Caco-2 (cell line): ENCODE measurements at regions of chr10 and their contacts with region 1.

Region 1: DNA sequence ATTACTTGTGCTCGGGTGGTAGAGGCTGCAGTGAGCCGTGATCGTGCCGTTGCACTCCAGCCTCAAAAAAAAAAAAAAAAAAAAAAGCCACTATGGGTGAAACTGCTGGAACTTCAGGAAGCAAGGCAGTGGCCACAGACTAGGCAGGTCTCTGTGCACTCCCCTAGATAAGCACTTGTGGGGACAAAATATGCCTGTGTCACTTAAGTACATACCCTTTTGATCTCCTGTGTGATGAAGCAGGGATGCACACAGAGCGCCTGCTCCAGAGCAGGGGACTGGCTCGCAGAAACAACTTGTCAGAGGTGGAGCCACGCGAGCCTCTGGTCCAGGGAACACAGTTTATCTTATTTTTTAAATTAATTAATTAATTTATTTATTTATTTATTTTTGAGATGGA is 42.9 kb upstream of the PSAP start:
- DNase-seq: no peak
- H3K4me3 ChIP-seq: no peak overlapping the region
- H3K4me3 Mint-ChIP-seq: no peak overlapping the region
- H3K27ac Mint-ChIP-seq: no peak overlapping the region
- H3K4me1 ChIP-seq: peaks cover 22% of the 10 kb centered on the region
- H3K4me1 Mint-ChIP-seq: peaks cover 20% of the 10 kb centered on the region
- H3K27me3 ChIP-seq: no peaks in the 10 kb centered on the region
- H3K27me3 Mint-ChIP-seq: no peaks in the 10 kb centered on the region
- CTCF ChIP-seq: no peak

Region 2: DNA sequence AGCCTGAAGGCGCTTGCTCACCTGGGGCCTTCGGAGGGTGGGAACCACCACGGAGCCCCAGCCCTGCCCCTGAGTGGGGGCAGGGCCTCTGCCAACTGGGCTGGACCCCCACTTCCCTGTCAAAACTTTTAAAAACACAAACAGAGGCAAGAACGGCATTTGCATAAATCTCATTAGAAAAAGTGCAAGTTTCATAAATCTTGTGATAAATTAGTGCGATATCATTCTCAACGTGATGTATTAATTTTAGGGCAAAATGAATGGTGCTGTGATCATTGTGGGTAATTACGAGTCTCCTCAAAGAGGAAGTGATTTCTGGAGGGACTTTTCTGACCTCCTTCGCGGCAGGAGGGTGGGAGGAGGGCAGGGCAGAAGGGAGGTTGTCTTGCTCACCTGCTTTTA is 398.9 kb before region 1 on chr10:
- CTCF ChIA-PET with region 1: no interaction called
- POLR2A ChIA-PET with region 1: no interaction called
- intact Hi-C with region 1: no loop called
- DNase-seq: no peak
- H3K4me3 ChIP-seq: no peak overlapping the region
- H3K4me3 Mint-ChIP-seq: no peak overlapping the region
- H3K27ac Mint-ChIP-seq: no peak overlapping the region
- H3K4me1 ChIP-seq: no peaks in the 10 kb centered on the region
- H3K4me1 Mint-ChIP-seq: no peaks in the 10 kb centered on the region
- H3K27me3 ChIP-seq: no peaks in the 10 kb centered on the region
- H3K27me3 Mint-ChIP-seq: peaks cover 4% of the 10 kb centered on the region
- CTCF ChIP-seq: no peak

Region 3: DNA sequence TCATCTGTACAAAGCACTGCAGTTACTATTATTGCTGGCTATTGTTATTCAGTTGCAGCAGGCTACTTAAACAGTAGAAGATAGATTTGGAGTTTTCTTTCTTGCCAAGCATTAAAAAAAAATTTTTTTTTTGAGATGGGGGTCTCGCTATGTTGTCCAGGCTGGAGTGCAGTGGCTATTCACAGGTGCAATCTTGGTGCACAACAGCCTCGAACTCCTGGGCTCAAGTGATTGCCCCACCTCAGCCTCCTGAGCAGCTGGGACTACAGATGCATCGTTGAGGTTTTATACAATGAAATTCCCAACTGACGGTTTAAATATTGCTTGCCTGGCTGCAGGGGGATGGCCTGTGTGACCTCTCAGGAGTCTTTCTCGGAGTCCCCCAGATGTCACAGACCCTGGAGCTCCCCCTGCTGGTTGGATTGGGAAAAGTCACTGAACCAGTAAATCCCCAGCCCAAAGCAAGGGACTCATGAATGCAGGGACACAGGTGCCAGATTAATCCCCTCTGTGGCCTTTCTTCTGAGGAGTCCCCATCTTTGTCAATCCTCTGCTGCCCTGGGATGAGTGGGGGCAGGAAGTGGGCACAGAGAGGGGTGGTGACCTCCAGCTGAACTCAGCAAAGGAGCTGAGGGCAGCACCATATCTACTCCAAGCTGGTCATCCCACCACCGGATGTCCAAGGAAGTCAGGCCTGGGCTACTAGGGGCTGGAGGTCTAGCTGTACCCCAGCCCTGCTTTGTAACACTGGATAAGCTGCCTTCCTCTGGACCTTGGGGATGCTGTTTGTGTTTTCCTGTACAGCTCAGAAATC is 323.9 kb before region 1 on chr10:
- CTCF ChIA-PET with region 1: no interaction called
- POLR2A ChIA-PET with region 1: no interaction called
- intact Hi-C with region 1: no loop called
- DNase-seq: peak; percentile 79 to 88
- H3K4me3 ChIP-seq: no peak overlapping the region
- H3K4me3 Mint-ChIP-seq: no peak overlapping the region
- H3K27ac Mint-ChIP-seq: no peak overlapping the region
- H3K4me1 ChIP-seq: no peaks in the 10 kb centered on the region
- H3K4me1 Mint-ChIP-seq: no peaks in the 10 kb centered on the region
- H3K27me3 ChIP-seq: no peaks in the 10 kb centered on the region
- H3K27me3 Mint-ChIP-seq: peaks cover 5% of the 10 kb centered on the region
- CTCF ChIP-seq: peak; percentile 94 to 95

Region 4: DNA sequence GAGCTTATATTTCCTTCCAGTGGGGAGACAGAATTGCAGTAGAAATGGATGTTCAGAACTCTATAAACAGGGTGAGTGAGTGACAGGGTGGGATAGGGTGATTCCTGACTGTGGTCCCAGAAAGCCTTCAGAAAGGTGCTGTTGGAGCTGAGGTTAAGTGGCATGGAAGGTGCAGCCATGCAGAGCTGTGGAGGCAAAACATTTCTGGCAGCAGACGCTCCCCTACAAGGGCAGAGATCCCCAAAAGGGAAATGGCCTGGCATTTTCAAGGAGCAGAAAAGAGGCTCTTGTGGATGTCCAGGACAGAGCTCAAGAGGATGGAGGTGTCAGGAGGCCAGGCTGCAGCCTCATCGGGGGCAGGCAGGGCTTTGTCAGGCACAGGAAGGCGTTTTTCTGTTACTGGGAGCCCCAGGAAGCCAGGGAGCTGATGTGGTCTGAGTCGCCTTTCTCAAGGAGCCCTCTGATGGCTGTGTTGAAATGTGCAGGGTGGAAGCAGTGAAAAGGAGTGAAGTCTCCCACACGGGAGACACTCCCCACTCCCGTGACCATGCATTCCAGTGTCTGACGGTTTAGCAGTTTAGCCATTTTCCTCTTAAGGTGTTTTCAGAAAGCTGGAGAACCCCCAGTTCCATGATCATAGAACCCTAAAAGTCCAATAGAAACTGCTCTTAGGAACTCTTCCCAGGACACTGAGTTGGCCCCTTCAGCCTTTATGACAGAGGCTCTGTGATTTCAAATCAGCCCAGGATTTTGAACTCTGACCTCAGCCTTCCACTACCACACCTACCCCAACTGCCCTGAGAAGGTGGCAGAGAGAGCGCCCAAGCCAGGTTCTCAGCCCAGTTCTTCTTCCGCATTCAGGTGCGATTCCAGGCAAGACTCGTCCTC is 270.6 kb before region 1 on chr10:
- CTCF ChIA-PET with region 1: no interaction called
- POLR2A ChIA-PET with region 1: no interaction called
- intact Hi-C with region 1: no loop called
- DNase-seq: peak; percentile 58 to 76
- H3K4me3 ChIP-seq: no peak overlapping the region
- H3K4me3 Mint-ChIP-seq: no peak overlapping the region
- H3K27ac Mint-ChIP-seq: peak overlapping the region; percentile 70
- H3K4me1 ChIP-seq: peaks cover 33% of the 10 kb centered on the region
- H3K4me1 Mint-ChIP-seq: peaks cover 36% of the 10 kb centered on the region
- H3K27me3 ChIP-seq: no peaks in the 10 kb centered on the region
- H3K27me3 Mint-ChIP-seq: no peaks in the 10 kb centered on the region
- CTCF ChIP-seq: peak in 1 of 2 experiments; percentile 41

Region 5: DNA sequence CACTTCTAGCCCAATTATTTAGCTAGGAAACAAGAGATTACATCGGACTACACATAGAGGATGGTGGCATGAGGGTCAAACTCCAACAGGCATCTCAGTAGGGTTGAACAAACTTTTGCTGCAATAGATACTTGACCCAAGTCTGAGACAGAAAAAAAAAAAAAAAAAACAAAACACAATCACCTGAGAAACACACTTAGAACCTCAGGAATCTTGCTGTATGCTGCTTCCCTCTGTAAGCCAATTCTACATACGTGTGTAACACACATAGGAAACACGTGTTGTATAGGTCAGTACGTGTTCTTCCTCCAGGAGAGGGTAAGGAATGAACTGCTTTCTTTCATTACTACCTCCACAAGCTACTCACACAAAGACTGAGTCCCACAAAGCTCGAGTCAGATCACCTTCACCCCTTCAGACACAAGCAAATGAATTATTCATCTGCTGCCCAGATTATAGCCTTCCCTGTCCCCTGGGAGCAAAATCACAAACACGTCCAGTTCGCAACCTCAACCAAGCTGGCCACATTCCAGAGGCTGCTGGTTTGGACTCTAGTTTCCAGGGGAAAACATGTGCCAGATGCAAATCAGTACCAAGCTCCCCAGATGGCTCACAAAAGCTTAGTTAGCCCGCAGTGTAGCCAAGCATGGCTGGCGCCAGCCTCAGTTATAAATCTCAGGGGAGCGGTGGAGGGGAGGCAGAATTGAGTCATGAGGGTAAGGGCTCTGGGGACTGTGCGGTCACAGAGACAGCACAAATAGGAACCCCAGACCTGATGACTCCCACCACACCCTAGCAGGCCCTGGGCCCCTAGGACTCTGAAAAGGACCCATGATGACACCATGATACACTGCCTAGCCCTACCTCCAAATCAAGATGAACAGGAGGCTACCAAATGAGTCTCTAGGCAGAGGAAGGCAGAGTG is 58.0 kb before region 1 on chr10:
- CTCF ChIA-PET with region 1: interaction called, 27 read pairs
- POLR2A ChIA-PET with region 1: no interaction called
- intact Hi-C with region 1: loop called (anchors 1 kb)
- DNase-seq: no peak
- H3K4me3 ChIP-seq: no peak overlapping the region
- H3K4me3 Mint-ChIP-seq: no peak overlapping the region
- H3K27ac Mint-ChIP-seq: peak overlapping the region; percentile 46
- H3K4me1 ChIP-seq: peaks cover 56% of the 10 kb centered on the region
- H3K4me1 Mint-ChIP-seq: peaks cover 48% of the 10 kb centered on the region
- H3K27me3 ChIP-seq: no peaks in the 10 kb centered on the region
- H3K27me3 Mint-ChIP-seq: no peaks in the 10 kb centered on the region
- CTCF ChIP-seq: no peak

Region 6: DNA sequence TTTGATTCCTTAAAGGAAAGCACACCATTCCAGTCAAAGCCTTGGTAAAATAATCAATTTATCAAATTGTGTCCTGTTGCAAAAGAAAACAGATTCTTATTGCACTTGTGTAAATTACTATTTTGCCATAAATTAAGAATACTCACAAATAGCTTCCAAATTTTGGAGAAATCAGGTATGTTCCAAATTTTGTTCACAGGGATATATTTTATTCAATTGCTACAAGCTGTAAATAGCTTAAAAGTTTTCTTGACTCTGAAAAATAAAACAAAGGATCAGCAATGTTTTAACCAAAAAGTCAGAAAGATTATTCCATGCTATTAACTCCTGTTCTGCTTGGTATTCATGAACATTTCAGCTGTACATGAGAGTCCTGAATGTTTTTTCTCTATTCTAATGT is 22.9 kb after region 1 on chr10:
- CTCF ChIA-PET with region 1: interaction called, 18 read pairs
- POLR2A ChIA-PET with region 1: no interaction called
- intact Hi-C with region 1: no loop called
- DNase-seq: no peak
- H3K4me3 ChIP-seq: no peak overlapping the region
- H3K4me3 Mint-ChIP-seq: no peak overlapping the region
- H3K27ac Mint-ChIP-seq: no peak overlapping the region
- H3K4me1 ChIP-seq: peaks cover 6% of the 10 kb centered on the region; the same call in 1 of the 2 replicates
- H3K4me1 Mint-ChIP-seq: peaks cover 12% of the 10 kb centered on the region
- H3K27me3 ChIP-seq: no peaks in the 10 kb centered on the region
- H3K27me3 Mint-ChIP-seq: no peaks in the 10 kb centered on the region
- CTCF ChIP-seq: no peak

Region 7: GRCh38 chr10:71963756-71964668 is 70.1 kb after region 1 on chr10 and contains the start of gene CHST3:
- CTCF ChIA-PET with region 1: interaction called, 15 read pairs
- POLR2A ChIA-PET with region 1: interaction called, 3 read pairs
- intact Hi-C with region 1: no loop called
- DNase-seq: peak; percentile 58 to 68
- H3K4me3 ChIP-seq: peak within 1 kb of the TSS; percentile 84
- H3K4me3 Mint-ChIP-seq: peak within 1 kb of the TSS; percentile 99
- H3K27ac Mint-ChIP-seq: peak within 1 kb of the TSS; percentile 96
- H3K4me1 ChIP-seq: peaks cover 67% of the 10 kb centered on the region
- H3K4me1 Mint-ChIP-seq: peaks cover 57% of the 10 kb centered on the region
- H3K27me3 ChIP-seq: no peaks in the 10 kb centered on the region
- H3K27me3 Mint-ChIP-seq: no peaks in the 10 kb centered on the region
- CTCF ChIP-seq: no peak
- total RNA-seq, gene CHST3: 40.9 and 46.0 TPM in 2 replicates

Region 8: GRCh38 chr10:72038458-72039001 is 144.6 kb after region 1 on chr10:
- CTCF ChIA-PET with region 1: interaction called, 11 read pairs
- POLR2A ChIA-PET with region 1: no interaction called
- intact Hi-C with region 1: no loop called
- DNase-seq: peak; percentile 83 to 91
- H3K4me3 ChIP-seq: no peak overlapping the region
- H3K4me3 Mint-ChIP-seq: peak overlapping the region; percentile 33
- H3K27ac Mint-ChIP-seq: peak overlapping the region; percentile 91
- H3K4me1 ChIP-seq: peaks cover 61% of the 10 kb centered on the region
- H3K4me1 Mint-ChIP-seq: peaks cover 43% of the 10 kb centered on the region
- H3K27me3 ChIP-seq: no peaks in the 10 kb centered on the region
- H3K27me3 Mint-ChIP-seq: no peaks in the 10 kb centered on the region
- CTCF ChIP-seq: no peak

Region 9: GRCh38 chr10:73044378-73045285 is 1150.7 kb after region 1 on chr10:
- CTCF ChIA-PET with region 1: no interaction called
- POLR2A ChIA-PET with region 1: no interaction called
- intact Hi-C with region 1: no loop called
- DNase-seq: no peak
- H3K4me3 ChIP-seq: no peak overlapping the region
- H3K4me3 Mint-ChIP-seq: no peak overlapping the region
- H3K27ac Mint-ChIP-seq: no peak overlapping the region
- H3K4me1 ChIP-seq: no peaks in the 10 kb centered on the region
- H3K4me1 Mint-ChIP-seq: no peaks in the 10 kb centered on the region
- H3K27me3 ChIP-seq: no peaks in the 10 kb centered on the region
- H3K27me3 Mint-ChIP-seq: no peaks in the 10 kb centered on the region
- CTCF ChIP-seq: no peak